Endothelial cell of umbilical vein (primary cell): ENCODE measurements at regions of chr20 and their contacts with region 1.

Region 1: DNA sequence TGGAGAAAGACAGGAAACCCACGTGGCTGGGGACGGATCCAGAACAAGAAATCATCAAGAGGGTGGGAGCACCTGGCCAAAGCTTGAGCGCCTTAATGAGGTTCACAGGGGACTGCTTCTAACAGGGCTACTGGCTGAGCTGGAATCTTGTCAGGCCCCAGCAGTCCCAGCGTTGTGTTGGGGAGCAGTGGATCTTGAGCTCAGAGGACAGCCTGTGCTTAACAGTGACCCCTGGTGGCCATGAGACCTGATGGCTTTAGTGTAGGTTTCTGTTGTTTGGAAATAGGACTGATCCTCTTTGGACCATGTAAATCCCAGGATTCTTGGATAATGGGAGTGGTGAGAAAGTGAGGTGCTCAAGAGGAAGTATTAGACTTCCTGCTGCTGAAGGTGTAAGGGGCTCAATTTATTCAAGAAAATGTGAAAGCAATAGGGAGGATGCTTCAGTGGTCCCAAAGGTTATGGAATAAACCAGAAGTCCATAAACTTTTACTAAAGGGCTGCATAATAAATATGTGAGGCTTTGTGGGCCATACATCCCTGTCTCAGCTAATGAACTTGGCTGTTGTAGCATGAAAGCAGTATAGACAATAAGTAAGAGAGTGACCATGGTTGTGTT is 216.2 kb downstream of the NFATC2 start:
- DNase-seq: peak; percentile 39
- H3K4me3 ChIP-seq: no peak overlapping the region
- H3K27ac ChIP-seq: no peak overlapping the region
- H3K4me1 ChIP-seq: no peaks in the 10 kb centered on the region
- H3K27me3 ChIP-seq: peaks cover 0 to 9% of the 10 kb centered on the region in 2 experiments
- CTCF ChIP-seq: peak; percentile 64 to 80
- POLR2A ChIP-seq: no peak

Region 2: DNA sequence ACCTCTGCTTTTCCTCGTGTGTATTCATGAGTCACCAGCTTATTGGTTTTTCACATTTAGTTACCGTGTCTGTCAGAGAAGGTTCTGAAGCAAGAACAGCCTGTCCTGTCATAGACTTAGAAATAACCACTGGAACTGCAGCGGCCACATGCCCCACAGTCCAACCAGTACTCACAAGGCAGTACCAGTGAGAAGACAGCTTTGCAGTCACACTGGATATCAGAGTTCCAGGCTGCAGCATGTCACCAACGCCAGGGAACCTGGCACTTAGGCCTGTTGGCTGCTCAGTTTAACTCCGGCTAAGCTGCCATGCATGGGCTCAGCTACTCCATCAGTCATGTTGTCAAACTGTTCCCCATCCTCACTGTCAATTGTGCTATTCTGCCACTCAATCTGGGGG is 435.2 kb before region 1 on chr20:
- CTCF ChIA-PET with region 1: no interaction called
- POLR2A ChIA-PET with region 1: no interaction called
- dilution Hi-C with region 1: no loop called
- intact Hi-C with region 1: no loop called
- DNase-seq: no peak
- H3K4me3 ChIP-seq: no peak overlapping the region
- H3K27ac ChIP-seq: no peak overlapping the region
- H3K4me1 ChIP-seq: no peaks in the 10 kb centered on the region
- H3K27me3 ChIP-seq: no peaks in the 10 kb centered on the region
- CTCF ChIP-seq: no peak
- POLR2A ChIP-seq: no peak

Region 3: DNA sequence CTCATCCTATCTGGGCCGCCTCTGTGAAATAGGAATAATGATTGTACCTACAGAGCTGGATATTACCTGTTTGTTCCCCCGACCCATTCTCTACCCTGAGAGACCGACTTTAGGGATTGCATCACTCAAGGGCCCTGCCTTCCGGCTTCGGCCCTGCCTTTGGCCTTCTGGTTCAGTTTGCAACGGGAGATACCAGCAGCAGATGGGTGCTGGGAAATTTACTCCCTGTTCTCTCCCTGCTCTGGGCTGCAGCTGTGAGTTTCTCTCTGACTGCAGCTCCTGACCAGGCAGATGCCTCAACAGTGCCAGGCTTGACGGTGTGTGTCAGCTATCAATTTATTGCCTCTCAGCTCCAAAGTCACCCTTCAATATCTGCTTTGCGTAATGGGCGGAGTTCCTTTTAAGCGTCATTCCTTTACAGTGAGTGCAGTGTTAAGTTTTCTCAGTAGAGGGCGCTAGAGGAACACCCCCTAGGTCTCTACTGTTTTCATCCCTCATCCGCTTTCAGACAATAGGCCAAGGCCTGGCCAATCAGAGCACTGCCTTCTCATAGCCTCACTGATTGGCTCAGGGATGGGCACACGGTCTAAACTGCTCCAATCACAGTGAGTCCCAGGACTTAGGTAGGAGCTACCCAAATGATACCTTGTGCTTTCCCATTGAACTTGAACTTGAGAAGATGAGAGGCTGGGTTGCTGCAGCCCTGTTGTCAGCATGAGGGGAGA is 333.4 kb before region 1 on chr20:
- CTCF ChIA-PET with region 1: interaction called, 95 read pairs
- POLR2A ChIA-PET with region 1: no interaction called
- dilution Hi-C with region 1: no loop called
- intact Hi-C with region 1: no loop called
- DNase-seq: peak; percentile 69
- H3K4me3 ChIP-seq: no peak overlapping the region
- H3K27ac ChIP-seq: no peak overlapping the region
- H3K4me1 ChIP-seq: no peaks in the 10 kb centered on the region
- H3K27me3 ChIP-seq: peaks cover 4 to 6% of the 10 kb centered on the region in 2 experiments
- CTCF ChIP-seq: peak; percentile 59 to 67
- POLR2A ChIP-seq: no peak

Region 4: DNA sequence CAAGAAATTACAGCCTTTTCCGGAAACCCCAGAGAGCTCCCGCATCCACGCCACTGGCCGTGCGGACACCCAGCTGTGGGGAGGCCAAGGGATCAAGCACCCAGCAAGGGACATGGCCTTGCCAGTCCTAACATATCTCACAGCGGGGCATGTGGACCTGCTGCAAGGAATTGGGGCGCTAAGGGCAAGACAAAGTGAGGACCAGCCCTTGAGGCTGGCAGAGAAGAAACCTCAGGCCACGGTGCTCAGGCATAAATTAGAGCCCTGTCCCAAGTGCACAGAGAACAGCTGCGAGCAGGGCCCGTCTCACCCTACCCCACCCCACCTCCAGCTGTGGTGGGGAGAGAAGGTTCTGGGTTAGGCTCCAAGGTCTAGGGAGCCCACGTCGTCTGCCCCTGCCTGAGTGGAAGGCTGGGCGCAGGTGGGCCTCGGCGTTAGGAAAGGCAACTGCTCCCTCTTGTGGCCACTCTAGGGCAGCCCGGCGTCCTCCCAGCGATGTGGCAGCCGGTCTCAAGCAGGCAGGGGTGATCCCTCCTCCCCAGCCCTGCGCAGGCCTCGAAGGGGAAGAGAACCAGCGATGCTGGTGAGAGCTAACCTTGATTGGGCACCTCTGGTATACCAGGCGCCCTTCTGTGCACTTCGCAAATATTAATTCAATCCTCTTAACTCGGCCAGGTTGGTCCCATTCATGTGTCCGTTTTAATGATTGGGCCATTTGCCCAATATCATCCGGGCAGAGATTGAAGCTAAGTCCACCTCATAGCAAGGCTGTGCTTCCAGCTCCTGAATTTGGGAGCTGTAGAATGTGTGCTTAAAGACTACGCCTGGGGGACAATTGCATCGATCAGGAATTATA is 19.6 kb before region 1 on chr20:
- CTCF ChIA-PET with region 1: interaction called, 64 read pairs
- POLR2A ChIA-PET with region 1: no interaction called
- dilution Hi-C with region 1: no loop called
- intact Hi-C with region 1: no loop called
- DNase-seq: peak; percentile 63
- H3K4me3 ChIP-seq: no peak overlapping the region
- H3K27ac ChIP-seq: no peak overlapping the region
- H3K4me1 ChIP-seq: no peaks in the 10 kb centered on the region
- H3K27me3 ChIP-seq: peaks cover 0 to 3% of the 10 kb centered on the region in 2 experiments
- CTCF ChIP-seq: peak; percentile 91 to 96
- POLR2A ChIP-seq: no peak

Region 5: GRCh38 chr20:51338671-51339440 is 12.5 kb after region 1 on chr20:
- CTCF ChIA-PET with region 1: interaction called, 14 read pairs
- POLR2A ChIA-PET with region 1: no interaction called
- dilution Hi-C with region 1: no loop called
- intact Hi-C with region 1: no loop called
- DNase-seq: no peak
- H3K4me3 ChIP-seq: no peak overlapping the region
- H3K27ac ChIP-seq: no peak overlapping the region
- H3K4me1 ChIP-seq: peaks cover 4% of the 10 kb centered on the region
- H3K27me3 ChIP-seq: no peaks in the 10 kb centered on the region
- CTCF ChIP-seq: no peak
- POLR2A ChIP-seq: no peak

Region 6: GRCh38 chr20:51354769-51355319 is 28.5 kb after region 1 on chr20:
- CTCF ChIA-PET with region 1: interaction called, 17 read pairs
- POLR2A ChIA-PET with region 1: no interaction called
- dilution Hi-C with region 1: no loop called
- intact Hi-C with region 1: no loop called
- DNase-seq: peak; percentile 56
- H3K4me3 ChIP-seq: no peak overlapping the region
- H3K27ac ChIP-seq: peak overlapping the region; percentile 79
- H3K4me1 ChIP-seq: peaks cover 36% of the 10 kb centered on the region
- H3K27me3 ChIP-seq: no peaks in the 10 kb centered on the region
- CTCF ChIP-seq: no peak
- POLR2A ChIP-seq: no peak